ENCODE measurements at regions of chr10 and their contacts with region 1.

Region 1: DNA sequence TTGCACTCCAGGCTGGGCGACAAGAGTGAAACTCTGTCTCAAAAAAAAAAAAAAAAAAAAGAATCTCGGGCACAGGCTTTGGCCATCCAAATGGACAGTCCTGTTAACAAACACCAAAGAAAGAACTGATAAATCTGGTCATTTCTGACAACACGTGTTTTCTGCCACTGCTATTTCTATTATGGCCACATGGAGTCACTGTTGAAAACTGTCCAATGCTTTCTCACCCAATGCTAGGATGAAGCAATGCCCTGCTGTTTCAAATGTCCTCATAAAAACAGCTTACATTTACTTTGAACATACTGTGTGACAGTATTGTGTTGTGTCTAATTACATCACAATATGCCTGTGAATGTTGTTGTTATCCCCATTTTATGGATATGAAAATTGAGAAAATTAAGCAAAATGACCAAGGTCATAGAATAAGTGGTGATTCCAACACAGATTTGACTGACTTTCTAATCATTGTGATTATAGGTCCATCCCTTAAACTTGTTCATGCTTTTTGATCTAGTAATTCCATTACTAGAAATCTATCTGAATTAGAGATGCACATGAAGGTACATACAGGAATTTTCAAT is 19.9 kb upstream of the MAP3K8 start:
- DNase-seq: peak; percentile 71
- ATAC-seq: peak; percentile 75
- H3K4me3 ChIP-seq: no peak overlapping the region
- H3K27ac ChIP-seq: no peak overlapping the region
- H3K4me1 ChIP-seq: no peaks in the 10 kb centered on the region
- H3K27me3 ChIP-seq: no peaks in the 10 kb centered on the region
- CTCF ChIP-seq: peak; percentile 88
- POLR2A ChIP-seq: no peak
- RAD21 ChIP-seq: peak; percentile 89

Region 2: GRCh38 chr10:30348378-30348776 is 65.7 kb before region 1 on chr10:
- CTCF ChIA-PET with region 1: no interaction called
- POLR2A ChIA-PET with region 1: no interaction called
- dilution Hi-C with region 1: no loop called
- in situ Hi-C with region 1: no loop called
- intact Hi-C with region 1: loop called (anchors 2 kb)
- DNase-seq: peak; percentile 2
- ATAC-seq: peak; percentile 33
- H3K4me3 ChIP-seq: peak overlapping the region; percentile 97
- H3K27ac ChIP-seq: peak overlapping the region; percentile 99
- H3K4me1 ChIP-seq: peaks cover 2% of the 10 kb centered on the region
- H3K27me3 ChIP-seq: no peaks in the 10 kb centered on the region
- CTCF ChIP-seq: no peak
- POLR2A ChIP-seq: no peak
- RAD21 ChIP-seq: no peak

Region 3: DNA sequence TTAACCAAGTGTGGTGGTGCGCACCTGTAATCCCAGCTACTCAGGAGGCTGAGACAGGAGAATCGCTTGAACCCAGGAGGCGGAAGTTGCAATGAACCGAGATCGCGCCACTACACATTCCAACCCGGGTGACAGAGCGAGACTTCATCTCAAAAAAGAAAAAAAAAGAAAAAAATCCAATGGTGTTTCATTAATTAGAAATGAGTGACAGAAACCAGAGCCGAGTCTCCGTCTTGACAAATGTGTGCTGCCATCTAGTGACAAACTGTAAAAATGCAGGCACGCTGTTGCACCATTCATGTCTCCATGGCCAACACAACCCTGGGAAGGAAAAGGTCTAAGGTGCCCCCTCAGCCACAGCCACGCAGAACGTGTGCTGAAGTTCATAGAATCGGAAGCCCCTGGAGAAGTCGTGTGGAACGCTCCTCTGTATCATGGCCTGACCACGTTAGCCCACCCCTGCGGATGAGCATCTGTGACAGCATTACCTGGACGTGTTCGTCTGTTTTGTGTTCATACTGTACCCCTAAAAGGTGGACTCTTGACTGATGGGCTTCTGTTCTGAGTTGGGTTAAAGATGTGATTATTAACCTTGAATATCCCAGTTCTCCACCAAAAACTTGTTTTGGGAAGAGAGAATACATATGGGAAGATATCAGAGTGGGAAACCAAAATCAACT is 120.5 kb after region 1 on chr10:
- CTCF ChIA-PET with region 1: interaction called, 4 read pairs
- POLR2A ChIA-PET with region 1: no interaction called
- dilution Hi-C with region 1: no loop called
- in situ Hi-C with region 1: no loop called
- intact Hi-C with region 1: loop called (anchors 1 kb)
- DNase-seq: peak; percentile 67
- ATAC-seq: peak; percentile 74
- H3K4me3 ChIP-seq: no peak overlapping the region
- H3K27ac ChIP-seq: no peak overlapping the region
- H3K4me1 ChIP-seq: 0 out of 2 replicates have a peak, but pooled peaks cover 2% of the 10 kb centered on the region
- H3K27me3 ChIP-seq: peaks cover 7% of the 10 kb centered on the region
- CTCF ChIP-seq: peak; percentile 82
- POLR2A ChIP-seq: no peak
- RAD21 ChIP-seq: peak; percentile 86

Region 4: DNA sequence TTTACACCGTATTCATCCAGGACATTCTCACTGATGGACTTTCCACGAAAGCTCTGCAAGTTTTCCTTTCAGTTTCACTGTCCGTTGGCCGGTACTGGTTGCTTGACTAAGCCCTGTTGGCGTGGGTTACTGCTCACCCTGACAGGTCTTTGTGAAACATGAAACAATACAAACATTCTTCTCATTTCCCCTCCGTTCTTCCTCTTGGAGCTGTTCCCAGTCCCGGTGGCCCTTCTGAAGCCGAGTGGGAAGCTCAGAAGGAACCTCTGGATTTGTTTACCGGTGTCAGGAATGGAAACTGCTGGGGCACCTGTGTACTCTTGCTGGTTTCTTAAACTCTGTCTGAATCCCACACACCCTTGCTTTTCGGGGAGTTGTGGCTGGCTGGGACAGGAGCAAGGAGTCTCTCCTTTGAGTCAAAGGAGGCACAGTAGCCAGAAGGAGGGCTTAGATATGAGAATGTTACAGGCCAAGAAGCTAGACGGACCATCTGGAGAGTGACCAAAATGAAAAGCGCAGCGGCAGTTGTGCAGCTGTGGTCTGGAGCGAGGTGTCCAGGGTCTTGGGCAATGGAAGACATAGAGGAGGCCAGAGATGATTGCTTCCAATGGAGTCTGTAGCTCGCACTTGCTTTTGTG is 169.8 kb after region 1 on chr10:
- CTCF ChIA-PET with region 1: interaction called, 4 read pairs
- POLR2A ChIA-PET with region 1: no interaction called
- dilution Hi-C with region 1: no loop called
- in situ Hi-C with region 1: no loop called
- intact Hi-C with region 1: loop called (anchors 5 kb)
- DNase-seq: peak; percentile 77
- ATAC-seq: peak; percentile 88
- H3K4me3 ChIP-seq: peak overlapping the region; percentile 28; the same call in 1 of the 2 replicates
- H3K27ac ChIP-seq: no peak overlapping the region
- H3K4me1 ChIP-seq: peaks cover 2% of the 10 kb centered on the region; the same call in 1 of the 2 replicates
- H3K27me3 ChIP-seq: peaks cover 14% of the 10 kb centered on the region
- CTCF ChIP-seq: no peak
- POLR2A ChIP-seq: no peak
- RAD21 ChIP-seq: no peak

Region 5: DNA sequence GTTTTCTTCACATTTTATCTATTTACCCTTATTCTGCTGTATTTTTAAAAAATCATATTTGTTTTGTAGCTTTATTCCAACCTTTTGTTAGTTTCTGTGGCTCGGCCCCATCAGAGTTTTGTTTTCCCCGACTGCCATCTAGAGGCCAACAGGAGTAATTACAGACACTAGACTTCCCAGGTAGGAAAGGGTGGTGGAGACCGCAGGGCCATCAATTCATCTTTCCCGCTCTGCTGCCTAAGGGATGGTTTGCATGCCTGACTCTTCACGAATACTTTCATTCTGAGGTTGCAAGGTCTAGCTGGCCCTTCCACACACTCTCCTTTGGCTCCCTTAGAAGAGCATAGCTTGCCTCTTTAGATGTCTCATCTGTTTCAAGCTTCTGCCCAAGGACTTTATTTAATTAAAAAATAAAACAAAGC is 177.2 kb after region 1 on chr10:
- CTCF ChIA-PET with region 1: interaction called, 4 read pairs
- POLR2A ChIA-PET with region 1: no interaction called
- dilution Hi-C with region 1: no loop called
- in situ Hi-C with region 1: no loop called
- intact Hi-C with region 1: loop called (anchors 1 kb)
- DNase-seq: peak; percentile 53
- ATAC-seq: peak; percentile 85
- H3K4me3 ChIP-seq: no peak overlapping the region
- H3K27ac ChIP-seq: no peak overlapping the region
- H3K4me1 ChIP-seq: no peaks in the 10 kb centered on the region
- H3K27me3 ChIP-seq: peaks cover 32% of the 10 kb centered on the region
- CTCF ChIP-seq: peak; percentile 82
- POLR2A ChIP-seq: no peak
- RAD21 ChIP-seq: peak; percentile 77

Measured in IMR-90 (cell line).